Left ventricle myocardium superior (tissue), 1 donor: ENCODE measurements at regions of chr14 and their contacts with region 1.

Region 1: DNA sequence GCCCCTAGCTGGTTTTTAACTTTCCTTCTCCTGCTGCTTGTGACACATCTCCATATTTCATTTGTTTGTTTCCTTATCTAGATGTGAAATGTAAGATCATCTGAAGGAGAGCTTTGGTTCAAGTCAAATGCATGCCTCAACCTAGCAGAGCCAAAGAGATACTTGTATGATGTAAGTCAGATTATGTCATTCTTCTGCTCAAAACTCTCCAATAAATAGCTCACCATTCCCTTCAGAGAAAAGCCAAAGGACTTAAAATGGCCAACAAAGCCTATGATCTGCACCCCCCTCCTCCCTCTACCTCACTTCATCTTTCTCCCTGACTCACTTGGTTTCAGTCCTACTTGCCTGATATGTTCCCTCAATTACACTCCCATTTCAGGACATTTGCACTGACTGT is 68.1 kb downstream of the COX16 start:
- DNase-seq: no peak
- ATAC-seq: no peak

Region 2: DNA sequence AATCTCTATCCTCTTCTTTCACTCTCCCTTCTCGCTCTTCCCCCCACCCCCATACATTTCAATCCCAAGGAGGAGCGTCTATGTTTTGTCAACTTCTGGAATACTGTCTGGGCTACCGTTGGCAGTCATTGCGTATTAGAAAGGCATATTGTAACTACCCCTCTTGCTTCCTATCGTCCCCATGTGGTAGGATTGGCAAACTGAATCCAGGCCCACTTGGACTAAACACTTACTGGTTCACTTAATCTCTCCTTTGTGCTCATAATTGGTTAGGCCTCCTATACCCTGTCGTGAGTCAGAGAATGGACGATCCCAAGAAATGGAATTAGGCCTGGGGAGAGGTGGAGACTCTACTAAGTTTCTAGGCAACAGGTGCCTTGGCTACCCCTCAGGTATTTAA is 33.9 kb before region 1 on chr14:
- intact Hi-C with region 1: loop called (anchors 2 kb)
- DNase-seq: no peak
- ATAC-seq: no peak

Region 3: GRCh38 chr14:70339044-70339443 is 47.6 kb after region 1 on chr14:
- intact Hi-C with region 1: no loop called
- DNase-seq: no peak
- ATAC-seq: no peak